ENCODE measurements at regions of chrX and their contacts with region 1.

Region 1: DNA sequence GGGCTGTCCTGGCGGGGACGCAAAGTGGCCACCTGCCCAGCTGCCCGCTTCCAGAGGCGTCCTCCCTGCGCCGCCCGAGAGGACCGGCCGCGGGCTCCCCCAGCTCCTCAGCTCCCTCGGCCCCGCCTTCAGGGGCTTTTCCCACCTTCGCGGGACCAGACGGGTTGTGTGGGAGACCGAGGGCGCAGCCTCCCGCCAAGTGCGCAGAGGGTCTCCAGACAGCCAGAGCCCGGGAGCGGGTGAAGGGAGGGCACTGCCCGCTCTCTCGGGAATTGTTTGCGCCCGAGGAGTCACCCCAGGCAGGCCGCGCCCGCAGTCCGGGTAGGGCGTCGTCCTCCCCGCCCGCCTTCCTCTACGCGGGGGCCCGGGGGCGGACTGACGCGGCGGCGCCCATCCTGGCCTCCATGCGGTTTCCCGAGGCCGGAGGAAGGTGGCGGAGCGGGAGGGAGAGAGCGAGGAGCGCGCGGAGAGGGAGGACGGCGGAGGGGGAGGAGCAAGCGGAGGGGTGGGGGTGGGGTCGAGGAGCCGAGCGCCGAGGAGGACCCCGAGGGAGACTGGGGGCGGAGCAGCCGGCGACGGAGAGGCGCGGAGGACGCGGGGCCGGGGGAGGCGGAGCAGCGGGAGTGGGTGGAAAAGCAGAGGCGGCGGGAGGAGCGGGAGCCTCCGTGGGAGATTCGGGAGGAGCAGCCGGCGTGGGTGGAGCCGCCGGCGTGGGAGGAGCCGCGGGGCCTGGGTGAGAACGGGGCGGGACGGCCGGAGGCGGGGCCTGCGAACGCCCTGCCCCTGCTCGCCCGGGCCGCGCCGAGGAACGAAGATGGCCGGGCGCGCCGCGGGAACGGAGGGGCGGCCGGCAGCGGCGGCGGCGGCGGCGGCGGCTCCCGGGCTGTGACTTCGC is 47.6 kb downstream of the CLDN34 start:
- DNase-seq: peak; percentile 89 to 95 (median 92)
- ATAC-seq: peak; percentile 73 to 95 (median 92)
- H3K4me3 ChIP-seq: peak overlapping the region; percentile 41 to 80 (median 64)
- H3K27ac ChIP-seq: peak overlapping the region; percentile 82 to 96 (median 89)
- H3K4me1 ChIP-seq: peaks cover 0 to 38% (median 21%) of the 10 kb centered on the region in 12 donors
- H3K27me3 ChIP-seq: peaks cover 0 to 34% (median 0%) of the 10 kb centered on the region in 9 donors
- CTCF ChIP-seq: no peak
- POLR2A ChIP-seq: peak in 1 of 2 donors; percentile 51

Region 2: DNA sequence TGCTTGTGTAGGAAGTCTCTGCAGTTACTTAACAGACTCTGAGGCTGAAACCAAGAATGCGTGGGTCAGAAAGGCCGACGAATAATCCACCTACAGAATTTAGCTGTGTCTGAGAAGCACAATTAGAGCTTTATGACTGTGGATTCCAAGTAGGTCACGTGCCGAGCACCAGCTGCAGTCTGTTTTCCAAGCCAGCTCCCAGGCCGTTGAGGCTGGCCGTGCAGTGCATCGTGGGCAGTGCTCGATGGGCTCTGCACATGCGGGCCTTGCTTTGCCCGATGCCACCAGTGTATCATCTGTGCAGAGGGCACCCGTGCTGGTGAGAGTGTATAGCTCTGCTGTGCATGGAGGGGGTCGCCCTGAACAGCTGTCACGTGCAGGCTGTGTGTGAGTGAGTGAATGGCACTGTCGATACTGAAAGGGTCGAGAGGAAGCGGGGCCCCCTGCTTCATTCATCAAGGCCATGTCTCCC is 115.0 kb before region 1 on chrX:
- intact Hi-C with region 1: no loop called
- DNase-seq: no peak
- ATAC-seq: peak in 2 of 4 donors; percentile 41 to 68
- H3K4me3 ChIP-seq: no peak overlapping the region
- H3K27ac ChIP-seq: no peak overlapping the region
- H3K4me1 ChIP-seq: no peaks in the 10 kb centered on the region
- H3K27me3 ChIP-seq: peaks cover 0 to 5% (median 0%) of the 10 kb centered on the region in 9 donors
- CTCF ChIP-seq: no peak
- POLR2A ChIP-seq: no peak

Region 3: DNA sequence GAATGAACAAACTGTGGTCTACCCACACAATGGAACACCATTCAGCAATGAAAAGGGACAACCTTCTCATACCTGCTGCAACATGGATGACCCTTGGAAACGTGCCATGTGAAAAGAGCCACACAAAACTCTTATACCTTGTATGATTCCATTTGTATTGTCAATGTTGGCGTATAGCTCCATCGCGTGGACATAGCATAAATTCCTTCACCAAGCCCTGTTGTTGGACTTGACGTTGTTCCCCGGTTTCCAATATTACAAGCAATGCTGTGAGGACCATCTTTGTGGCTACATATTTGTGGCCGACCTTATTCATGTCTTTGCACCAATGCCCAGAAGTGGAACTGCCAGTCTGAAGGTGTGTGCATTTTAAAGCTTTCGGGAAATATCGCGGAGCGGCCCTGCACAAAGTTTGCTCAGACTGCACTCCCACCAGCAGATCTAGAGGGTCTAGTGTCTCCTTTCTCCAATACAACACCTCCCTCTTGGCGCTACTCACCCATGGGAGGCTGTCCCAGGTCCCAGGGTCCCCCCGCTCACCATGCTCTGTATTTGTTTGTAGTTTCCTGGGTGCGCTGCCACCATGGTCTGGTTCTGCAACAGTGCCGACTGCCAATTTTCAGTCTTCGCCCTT is 47.8 kb before region 1 on chrX and contains the start of gene CLDN34:
- intact Hi-C with region 1: no loop called
- DNase-seq: no peak
- ATAC-seq: no peak
- H3K4me3 ChIP-seq: no peak within 1 kb of the TSS
- H3K27ac ChIP-seq: no peak within 1 kb of the TSS
- H3K4me1 ChIP-seq: no peaks in the 10 kb centered on the region
- H3K27me3 ChIP-seq: no peaks in the 10 kb centered on the region
- CTCF ChIP-seq: no peak
- POLR2A ChIP-seq: no peak
- total RNA-seq, gene CLDN34: not detected

Region 4: GRCh38 chrX:9977635-9978034 is 37.1 kb before region 1 on chrX:
- intact Hi-C with region 1: no loop called
- DNase-seq: no peak
- ATAC-seq: no peak
- H3K4me3 ChIP-seq: no peak overlapping the region
- H3K27ac ChIP-seq: no peak overlapping the region
- H3K4me1 ChIP-seq: peaks cover 0 to 18% (median 0%) of the 10 kb centered on the region in 12 donors
- H3K27me3 ChIP-seq: peaks cover 0 to 5% (median 0%) of the 10 kb centered on the region in 9 donors
- CTCF ChIP-seq: no peak
- POLR2A ChIP-seq: no peak

Region 5: DNA sequence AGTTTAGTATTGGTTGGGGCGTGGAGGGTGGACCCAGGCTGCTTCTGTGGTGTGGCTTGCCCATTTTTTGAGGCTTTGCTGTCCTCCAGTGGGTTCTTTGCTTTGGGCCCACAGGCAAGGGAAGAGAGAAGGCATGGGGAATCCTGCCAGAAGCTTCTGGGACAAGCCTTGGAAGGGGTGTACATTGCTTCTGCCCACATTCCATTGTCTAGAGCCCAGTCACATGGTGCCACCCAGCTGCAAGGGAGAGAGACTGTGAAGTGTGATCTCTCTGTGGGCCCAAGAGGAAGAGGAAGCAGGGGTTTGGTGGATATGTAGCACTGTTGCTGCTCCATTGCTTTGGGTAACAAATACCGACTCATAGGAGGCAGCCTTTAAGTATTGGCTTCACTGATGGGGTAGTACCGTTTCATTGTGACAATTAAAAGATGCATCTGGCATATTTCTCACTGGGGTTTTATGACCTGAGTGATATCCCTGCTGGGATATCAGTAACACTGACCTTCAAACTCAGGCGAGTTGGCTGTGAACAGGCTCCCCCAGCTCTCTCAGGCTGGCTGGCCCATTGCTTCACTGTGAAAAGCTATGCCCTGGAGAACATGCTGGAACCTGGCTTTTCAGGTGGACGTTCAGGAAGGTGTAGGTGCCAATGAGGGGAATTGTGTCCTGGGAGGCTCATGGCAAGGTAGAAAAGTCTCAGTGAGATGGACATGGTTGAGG is 38.4 kb after region 1 on chrX:
- intact Hi-C with region 1: loop called in 5 of 10 experiments (anchors 5 kb)
- DNase-seq: peak in 4 of 5 donors; percentile 30 to 56 (median 40)
- ATAC-seq: peak; percentile 71 to 87 (median 82)
- H3K4me3 ChIP-seq: no peak overlapping the region
- H3K27ac ChIP-seq: peak overlapping the region; percentile 32 to 75 (median 58)
- H3K4me1 ChIP-seq: peaks cover 0 to 63% (median 35%) of the 10 kb centered on the region in 12 donors
- H3K27me3 ChIP-seq: peaks cover 0 to 4% (median 0%) of the 10 kb centered on the region in 9 donors
- CTCF ChIP-seq: peak in 1 of 12 donors; percentile 6
- POLR2A ChIP-seq: no peak

Region 6: DNA sequence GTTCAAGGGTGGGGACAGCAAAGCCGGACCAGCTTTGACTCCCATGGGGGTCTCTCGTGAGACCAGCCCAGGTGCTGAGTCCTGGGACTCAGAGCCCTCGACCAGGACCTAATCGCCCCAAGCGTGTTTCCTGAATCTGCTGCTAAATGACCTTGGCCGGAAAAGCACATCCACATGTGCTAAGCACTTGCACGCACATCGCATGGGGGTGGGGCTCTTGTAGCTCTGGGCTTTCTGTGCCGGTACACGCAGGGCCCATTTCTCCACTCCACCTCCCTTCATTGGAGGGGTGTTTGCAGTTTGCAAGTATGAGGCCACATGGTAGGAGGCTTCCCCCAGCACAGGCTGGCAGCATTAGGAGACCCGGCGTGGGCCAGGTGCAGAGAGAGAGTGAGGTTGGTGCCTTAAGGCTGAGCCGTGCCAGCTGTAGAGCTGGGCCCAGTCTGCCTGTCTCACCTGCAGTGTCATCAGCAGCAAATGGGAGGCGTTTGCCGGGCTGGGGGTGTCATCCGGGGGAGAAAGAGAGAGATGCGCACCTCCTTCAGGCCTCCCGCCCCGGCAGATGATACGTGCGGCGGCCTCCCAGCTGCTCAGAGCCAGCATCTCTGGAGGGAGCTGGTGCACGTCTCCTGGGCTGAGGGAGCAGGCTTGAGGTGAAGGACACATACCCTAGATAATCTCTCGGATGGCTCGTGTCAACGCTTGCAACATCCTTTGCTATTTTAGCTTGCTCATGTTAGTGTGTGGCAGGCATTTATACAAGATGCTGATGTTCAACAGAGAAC is 96.8 kb after region 1 on chrX:
- intact Hi-C with region 1: loop called in 7 of 10 experiments (anchors 5 kb)
- DNase-seq: peak in 1 of 5 donors; percentile 66
- ATAC-seq: peak; percentile 55 to 70 (median 61)
- H3K4me3 ChIP-seq: no peak overlapping the region
- H3K27ac ChIP-seq: peak overlapping the region in 8 of 12 donors; percentile 16 to 57 (median 40)
- H3K4me1 ChIP-seq: peaks cover 0 to 65% (median 30%) of the 10 kb centered on the region in 12 donors
- H3K27me3 ChIP-seq: no peaks in the 10 kb centered on the region
- CTCF ChIP-seq: no peak
- POLR2A ChIP-seq: no peak